Astrocyte of the cerebellum (primary cell): ENCODE measurements at regions of chr17 and their contacts with region 1.

Region 1: DNA sequence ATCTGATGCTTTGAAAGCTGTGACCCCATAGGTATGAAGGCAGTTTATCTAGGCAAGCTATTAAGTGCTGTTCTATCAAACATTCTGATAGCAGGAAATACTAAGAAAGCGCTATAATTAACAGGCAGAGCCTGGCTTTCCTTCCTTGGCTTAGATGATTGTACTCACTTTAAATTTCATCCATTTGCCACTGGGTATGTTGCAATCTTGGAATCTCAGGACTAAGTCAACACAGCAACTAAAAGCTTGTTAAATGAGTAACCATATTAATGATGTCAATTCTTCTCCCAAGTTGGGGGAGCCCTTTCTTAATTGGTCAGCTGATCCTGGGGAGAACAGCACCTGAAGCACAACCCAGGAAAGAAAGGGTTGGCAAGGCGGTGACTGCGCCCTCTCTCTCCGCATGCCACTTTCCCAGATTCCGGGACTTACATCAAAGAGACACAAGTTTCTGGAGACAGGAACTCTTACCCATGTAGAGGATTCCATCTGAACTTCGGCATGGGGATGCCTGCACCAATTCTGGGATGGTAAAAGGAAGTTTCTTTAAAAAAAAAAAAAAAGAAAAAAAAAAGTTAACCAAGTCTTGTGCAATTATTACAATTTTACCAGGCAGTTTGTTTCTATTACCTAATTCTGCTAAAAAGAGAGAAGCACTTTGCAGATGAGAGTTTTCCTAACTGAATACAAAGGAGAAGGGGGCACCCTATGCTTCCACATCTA is 54.4 kb upstream of the ICAM2 start:
- DNase-seq: no peak
- H3K4me3 ChIP-seq: no peak overlapping the region
- CTCF ChIP-seq: no peak

Region 2: GRCh38 chr17:64129764-64130558 is 55.1 kb after region 1 on chr17 and contains the start of gene ERN1:
- in situ Hi-C with region 1: loop called (anchors 5 kb)
- DNase-seq: peak; percentile 73
- H3K4me3 ChIP-seq: peak within 1 kb of the TSS; percentile 47
- CTCF ChIP-seq: no peak